Mucosa of descending colon (tissue), 3 donors: ENCODE measurements at regions of chr13 and their contacts with region 1.

Region 1: GRCh38 chr13:39616087-39616694 is 13.2 kb upstream of the LHFPL6 start:
- DNase-seq: peak in 1 of 3 donors; percentile 58
- ATAC-seq: peak; percentile 64
- H3K4me3 ChIP-seq: no peak overlapping the region
- H3K4me1 ChIP-seq: no peaks in the 10 kb centered on the region
- CTCF ChIP-seq: peak; percentile 68

Region 2: GRCh38 chr13:38641164-38641951 is 974.8 kb before region 1 on chr13:
- intact Hi-C with region 1: no loop called
- DNase-seq: no peak
- ATAC-seq: no peak
- H3K4me3 ChIP-seq: no peak overlapping the region
- H3K4me1 ChIP-seq: peaks cover 11% of the 10 kb centered on the region
- CTCF ChIP-seq: no peak

Region 3: GRCh38 chr13:39016787-39017186 is 599.4 kb before region 1 on chr13:
- intact Hi-C with region 1: no loop called
- DNase-seq: peak in 1 of 3 donors; percentile 41
- ATAC-seq: peak; percentile 77
- H3K4me3 ChIP-seq: no peak overlapping the region
- H3K4me1 ChIP-seq: no peaks in the 10 kb centered on the region
- CTCF ChIP-seq: peak; percentile 31

Region 4: GRCh38 chr13:39144941-39145533 is 471.2 kb before region 1 on chr13:
- intact Hi-C with region 1: loop called (anchors 5 to 10 kb)
- DNase-seq: peak in 2 of 3 donors; percentile 22 to 67
- ATAC-seq: peak; percentile 67
- H3K4me3 ChIP-seq: no peak overlapping the region
- H3K4me1 ChIP-seq: no peaks in the 10 kb centered on the region
- CTCF ChIP-seq: peak; percentile 29

Region 5: DNA sequence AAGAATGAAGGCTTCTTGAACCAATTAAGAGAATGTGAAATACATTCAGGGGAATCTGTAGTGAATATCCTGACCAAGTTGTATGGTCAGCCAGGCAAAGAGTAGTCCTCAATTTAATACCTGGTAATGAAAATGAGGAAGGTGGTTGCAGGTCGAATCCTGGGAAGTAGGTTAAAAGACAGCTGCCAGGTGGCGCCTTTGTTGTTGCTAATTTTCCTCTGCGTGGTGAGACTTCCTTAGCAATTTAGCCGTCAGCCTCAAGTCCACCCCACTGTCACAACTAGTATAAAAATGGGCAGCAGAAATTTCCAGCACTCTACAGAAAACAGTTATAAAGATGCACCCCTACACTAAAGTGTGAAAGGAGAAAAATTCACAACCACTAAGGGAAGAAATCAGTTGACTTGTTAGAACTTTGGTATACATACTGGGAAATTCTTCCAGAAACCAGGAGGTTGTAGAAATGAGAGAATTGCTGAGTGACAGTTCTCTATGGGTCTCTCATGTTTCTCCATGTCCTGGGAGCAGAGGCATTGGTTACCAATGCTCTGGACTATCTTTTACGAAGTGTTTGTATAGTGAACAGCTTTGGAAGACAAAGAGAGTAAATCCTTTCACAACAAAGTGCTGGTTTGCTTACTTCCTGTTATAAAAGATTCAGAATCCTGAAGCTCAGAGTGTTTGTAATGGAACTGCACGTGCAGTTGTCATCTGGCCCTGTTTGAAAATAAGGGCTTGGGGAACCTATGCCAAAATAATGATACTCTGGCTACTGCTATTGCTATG is 342.0 kb before region 1 on chr13:
- intact Hi-C with region 1: loop called in 1 of 2 experiments (anchors 10 kb)
- DNase-seq: peak in 2 of 3 donors; percentile 35 to 62
- ATAC-seq: peak; percentile 49
- H3K4me3 ChIP-seq: no peak overlapping the region
- H3K4me1 ChIP-seq: no peaks in the 10 kb centered on the region
- CTCF ChIP-seq: no peak

Region 6: DNA sequence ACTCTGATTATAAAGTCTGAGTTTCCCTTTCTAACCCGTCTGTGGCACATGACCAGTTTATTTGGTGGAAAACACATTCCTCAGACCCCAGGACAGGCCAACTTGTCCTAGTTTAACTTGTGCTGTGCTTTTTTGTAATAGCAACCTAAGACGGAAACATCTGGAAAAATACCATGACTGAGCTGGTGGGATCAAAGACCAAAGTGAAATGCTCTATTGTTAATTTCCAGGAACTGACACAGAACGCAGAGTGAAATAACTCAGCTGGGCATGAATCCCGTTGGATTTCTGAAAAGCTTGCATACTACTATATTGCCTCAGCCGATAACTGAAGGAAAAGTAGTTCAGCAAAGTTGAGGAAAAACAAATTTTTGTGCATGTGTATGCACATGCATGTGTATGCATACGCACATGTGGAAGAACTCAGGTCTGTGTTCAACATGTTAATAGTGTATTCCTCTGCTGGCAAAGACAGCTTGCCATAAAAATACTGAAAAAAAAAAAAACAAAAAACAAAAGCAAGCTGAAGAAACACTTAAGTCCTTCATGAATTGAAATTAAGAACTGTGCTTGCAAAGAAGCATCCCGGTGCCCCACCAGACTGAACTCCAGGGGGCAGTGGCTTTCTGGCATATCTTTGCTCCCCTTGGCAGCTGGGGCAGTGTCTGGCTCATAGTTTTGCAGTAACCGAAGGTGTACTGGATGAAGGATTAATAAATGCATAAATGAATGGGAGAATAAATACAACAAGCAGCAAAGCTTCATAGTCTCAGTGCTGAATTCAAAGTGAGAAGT is 201.0 kb before region 1 on chr13:
- intact Hi-C with region 1: loop called in 1 of 2 experiments (anchors 5 kb)
- DNase-seq: peak in 1 of 3 donors; percentile 25
- ATAC-seq: no peak
- H3K4me3 ChIP-seq: no peak overlapping the region
- H3K4me1 ChIP-seq: no peaks in the 10 kb centered on the region
- CTCF ChIP-seq: no peak

Region 7: GRCh38 chr13:39577838-39578491 is 38.2 kb before region 1 on chr13:
- intact Hi-C with region 1: no loop called
- DNase-seq: no peak
- ATAC-seq: no peak
- H3K4me3 ChIP-seq: no peak overlapping the region
- H3K4me1 ChIP-seq: no peaks in the 10 kb centered on the region
- CTCF ChIP-seq: no peak